AG04450 (cell line): ENCODE measurements at regions of chr1 and their contacts with region 1.

Region 1: DNA sequence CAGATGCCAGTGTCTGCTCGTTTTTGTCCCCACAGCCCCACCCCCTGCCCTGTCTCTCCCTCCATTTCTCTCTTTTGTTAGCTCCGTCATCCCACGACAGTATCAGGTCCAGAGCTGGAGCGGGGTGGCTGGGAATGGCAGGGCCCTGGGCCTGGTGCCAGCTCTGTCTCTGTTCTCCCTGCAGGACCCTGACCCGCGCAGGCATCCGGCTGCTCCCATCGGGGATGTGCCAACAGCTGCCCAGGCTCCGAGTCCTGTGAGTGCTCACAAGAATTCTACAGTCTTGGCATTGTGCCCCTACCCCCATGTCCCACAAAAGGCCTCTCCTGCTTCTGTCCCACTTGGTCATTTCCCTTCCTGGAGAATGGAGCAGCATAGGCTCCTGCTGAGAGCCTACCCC is 37.4 kb downstream of the UBE2T start:
- DNase-seq: no peak
- H3K4me3 ChIP-seq: no peak overlapping the region
- H3K27ac ChIP-seq: no peak overlapping the region
- H3K27me3 ChIP-seq: peaks cover 57% of the 10 kb centered on the region
- CTCF ChIP-seq: no peak

Region 2: DNA sequence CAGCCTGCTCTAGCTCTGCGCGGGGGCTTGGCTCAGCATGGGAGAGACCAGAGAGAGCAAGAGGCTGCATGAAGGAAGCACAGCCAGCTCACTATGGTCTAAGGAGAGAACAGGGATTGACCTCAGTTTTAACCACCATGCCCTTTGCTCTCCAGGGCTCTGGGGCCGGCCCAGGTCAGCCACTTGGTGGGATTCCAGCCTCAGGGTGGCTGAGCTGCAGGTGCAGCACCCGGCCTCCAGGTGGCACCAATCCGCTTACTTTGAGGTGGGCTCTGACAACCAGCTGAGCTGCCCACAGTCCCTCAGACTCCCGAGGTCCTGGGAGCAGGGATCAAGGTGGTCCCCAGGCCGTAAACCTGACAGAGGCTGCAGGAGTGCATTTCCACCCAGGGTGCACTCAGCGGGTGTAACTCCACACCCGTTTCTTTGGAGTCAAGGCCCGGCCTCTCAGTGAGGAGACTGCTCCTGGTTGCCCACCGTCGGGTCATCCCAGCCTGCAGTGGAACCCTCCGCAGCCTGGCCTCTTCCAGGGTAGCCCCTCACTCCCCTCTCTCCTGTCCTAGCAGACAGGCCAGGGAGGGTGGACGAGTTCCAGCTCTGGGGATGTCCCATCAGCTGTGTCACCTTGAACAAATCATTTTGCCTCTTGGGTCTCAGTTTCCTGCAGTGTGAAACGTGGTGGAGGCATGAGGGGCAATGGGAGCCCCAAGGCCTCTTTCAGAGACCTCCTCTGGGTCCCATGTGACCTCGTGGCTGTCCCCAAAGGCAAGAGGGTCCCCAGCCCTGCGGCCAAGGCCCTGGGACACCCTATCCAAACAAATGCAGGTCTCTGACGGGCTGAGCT is 111.4 kb before region 1 on chr1:
- CTCF ChIA-PET with region 1: interaction called, 15 read pairs
- POLR2A ChIA-PET with region 1: no interaction called
- DNase-seq: no peak
- H3K4me3 ChIP-seq: no peak overlapping the region
- H3K27ac ChIP-seq: no peak overlapping the region
- H3K27me3 ChIP-seq: peaks cover 50% of the 10 kb centered on the region
- CTCF ChIP-seq: peak; percentile 85

Region 3: DNA sequence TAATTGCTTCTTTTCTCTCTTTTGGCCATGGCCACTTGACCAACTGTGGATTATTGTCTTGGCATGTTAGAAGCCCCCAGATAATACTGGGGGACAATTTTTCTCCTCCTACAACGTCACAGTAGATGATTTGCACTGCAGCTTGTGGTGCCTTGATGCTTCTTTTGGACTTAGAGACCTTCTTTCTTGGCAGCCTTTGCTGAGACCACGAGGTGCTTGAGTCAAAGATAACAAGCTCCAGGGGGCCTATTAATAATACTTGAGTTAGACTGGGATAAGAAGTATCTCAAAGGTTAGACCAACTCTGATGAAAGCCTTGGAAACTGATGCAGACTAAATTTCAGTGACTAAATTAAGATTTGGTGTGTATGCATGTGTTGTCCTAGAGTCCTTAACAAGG is 47.4 kb after region 1 on chr1:
- CTCF ChIA-PET with region 1: no interaction called
- POLR2A ChIA-PET with region 1: no interaction called
- DNase-seq: no peak
- H3K4me3 ChIP-seq: no peak overlapping the region
- H3K27ac ChIP-seq: no peak overlapping the region
- H3K27me3 ChIP-seq: no peaks in the 10 kb centered on the region
- CTCF ChIP-seq: no peak